Activated CD4-positive, alpha-beta T cell treated with anti-CD3 and anti-CD28 coated beads, Interleukin-2, amount 10 ng/mL, durations not matched to agents 24 days and 14 days (primary cell): ENCODE measurements at regions of chr22 and their contacts with region 1.

Region 1: DNA sequence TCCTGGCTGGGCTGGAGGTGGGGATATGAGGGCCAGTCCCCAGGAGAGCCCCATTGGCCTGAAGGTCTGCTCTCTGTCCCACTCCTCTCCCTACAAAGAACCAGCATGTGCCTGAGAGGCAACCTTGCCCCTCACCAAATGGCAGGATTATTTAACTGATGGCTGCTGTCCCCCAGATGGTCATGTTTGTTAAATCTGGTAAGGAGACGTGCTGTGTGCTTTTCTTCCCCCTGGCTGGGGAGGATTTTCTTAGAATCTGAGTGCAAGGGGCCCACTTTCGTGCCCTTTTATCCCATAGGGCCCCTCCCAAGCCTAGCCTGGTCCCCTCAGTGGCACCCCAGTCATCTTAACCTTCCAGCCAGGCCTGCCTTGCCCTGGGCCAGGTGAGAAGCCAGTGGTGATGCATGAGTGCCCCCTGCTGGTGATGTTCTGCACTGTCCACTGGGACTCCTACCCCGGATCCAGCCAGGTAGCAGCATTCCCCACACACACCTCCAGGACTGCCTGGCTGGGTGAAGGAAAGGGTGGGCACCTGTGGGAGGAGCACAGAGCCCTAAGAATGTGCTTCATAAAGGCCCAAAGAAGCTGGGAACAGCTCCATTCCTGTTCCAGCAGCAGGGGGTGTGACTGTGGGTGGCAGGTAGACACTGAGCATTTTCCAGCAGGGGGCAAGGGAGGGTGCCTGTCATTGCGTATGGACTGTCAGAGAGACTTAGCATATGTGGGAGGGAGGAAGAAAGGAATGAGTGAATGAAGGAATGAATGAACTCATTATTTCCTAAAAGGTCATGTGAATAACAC is 28.9 kb downstream of the MFNG start:
- DNase-seq: peak; percentile 95
- H3K4me3 Mint-ChIP-seq: no peak overlapping the region
- H3K27ac Mint-ChIP-seq: no peak overlapping the region
- H3K4me1 Mint-ChIP-seq: peaks cover 9% of the 10 kb centered on the region
- H3K27me3 Mint-ChIP-seq: no peaks in the 10 kb centered on the region

Region 2: GRCh38 chr22:37267135-37267587 is 190.1 kb before region 1 on chr22:
- intact Hi-C with region 1: loop called (anchors 1 kb)
- DNase-seq: peak; percentile 95
- H3K4me3 Mint-ChIP-seq: peak overlapping the region; percentile 86
- H3K27ac Mint-ChIP-seq: peak overlapping the region; percentile 87
- H3K4me1 Mint-ChIP-seq: peaks cover 34% of the 10 kb centered on the region
- H3K27me3 Mint-ChIP-seq: peaks cover 5% of the 10 kb centered on the region

Region 3: DNA sequence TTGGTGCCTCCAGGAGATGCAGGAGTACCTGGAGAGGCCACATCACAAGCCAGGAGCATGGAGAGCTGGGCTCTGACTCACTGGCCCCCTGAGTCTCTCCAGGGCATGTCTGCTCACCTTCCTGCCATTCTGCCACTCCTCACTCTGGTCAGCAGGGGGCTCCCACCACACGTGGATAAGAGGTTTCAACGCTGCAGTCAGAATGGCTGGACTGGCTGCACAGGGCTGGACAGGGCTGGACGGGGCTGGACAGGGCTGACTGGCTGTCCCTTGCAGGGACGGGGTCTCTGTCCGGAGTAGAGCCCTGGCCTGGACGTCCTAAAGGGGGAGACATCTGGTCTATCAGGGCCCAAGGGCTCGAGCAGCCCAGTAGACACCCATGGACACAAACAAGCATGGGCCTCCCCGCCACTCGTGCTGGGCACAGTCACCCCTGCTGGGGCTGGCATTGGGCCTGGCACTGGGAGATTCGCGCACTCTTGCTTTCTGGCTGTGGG is 140.4 kb before region 1 on chr22:
- intact Hi-C with region 1: loop called (anchors 1 kb)
- DNase-seq: peak; percentile 90
- H3K4me3 Mint-ChIP-seq: no peak overlapping the region
- H3K27ac Mint-ChIP-seq: no peak overlapping the region
- H3K4me1 Mint-ChIP-seq: peaks cover 36% of the 10 kb centered on the region
- H3K27me3 Mint-ChIP-seq: peaks cover 14% of the 10 kb centered on the region

Region 4: DNA sequence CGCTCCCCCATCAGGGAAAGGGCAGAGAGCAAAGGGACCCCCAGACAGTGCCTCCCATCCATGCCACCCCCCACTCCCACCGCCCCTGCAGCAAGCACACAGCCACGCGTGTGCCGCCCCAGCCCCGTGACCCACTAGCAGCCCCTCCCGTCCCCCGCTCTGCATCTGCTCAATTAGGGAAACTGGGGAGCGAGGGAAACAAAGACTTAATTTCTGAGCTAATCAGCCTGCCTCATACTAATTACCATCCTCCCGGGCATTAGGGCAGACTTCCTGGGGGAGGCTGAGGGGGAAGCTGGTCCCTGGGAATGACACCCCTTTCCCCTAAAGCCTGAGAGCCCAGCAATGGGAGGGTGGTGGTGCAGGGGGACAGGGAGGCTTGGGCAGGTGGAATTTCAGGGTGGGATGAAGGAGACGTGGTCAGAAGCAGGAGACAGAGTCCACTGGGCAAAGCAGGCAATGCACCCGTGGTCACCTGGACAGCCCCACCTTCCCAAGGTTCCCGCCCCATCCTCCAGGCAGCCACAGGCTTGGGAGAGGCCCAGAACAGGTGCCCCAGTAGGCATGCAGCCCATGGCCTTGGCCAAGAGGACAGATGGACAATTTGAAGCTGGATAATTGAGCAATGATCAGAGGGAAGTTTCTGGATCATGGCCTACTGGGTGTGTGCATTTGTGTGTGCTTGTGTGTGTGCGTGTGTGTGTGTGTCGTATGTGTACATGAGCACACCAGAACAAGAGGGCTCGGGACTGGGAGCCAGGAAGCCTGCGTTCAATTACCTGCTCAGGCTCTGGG is 50.7 kb before region 1 on chr22:
- intact Hi-C with region 1: no loop called
- DNase-seq: no peak
- H3K4me3 Mint-ChIP-seq: no peak overlapping the region
- H3K27ac Mint-ChIP-seq: no peak overlapping the region
- H3K4me1 Mint-ChIP-seq: peaks cover 4% of the 10 kb centered on the region
- H3K27me3 Mint-ChIP-seq: no peaks in the 10 kb centered on the region

Region 5: DNA sequence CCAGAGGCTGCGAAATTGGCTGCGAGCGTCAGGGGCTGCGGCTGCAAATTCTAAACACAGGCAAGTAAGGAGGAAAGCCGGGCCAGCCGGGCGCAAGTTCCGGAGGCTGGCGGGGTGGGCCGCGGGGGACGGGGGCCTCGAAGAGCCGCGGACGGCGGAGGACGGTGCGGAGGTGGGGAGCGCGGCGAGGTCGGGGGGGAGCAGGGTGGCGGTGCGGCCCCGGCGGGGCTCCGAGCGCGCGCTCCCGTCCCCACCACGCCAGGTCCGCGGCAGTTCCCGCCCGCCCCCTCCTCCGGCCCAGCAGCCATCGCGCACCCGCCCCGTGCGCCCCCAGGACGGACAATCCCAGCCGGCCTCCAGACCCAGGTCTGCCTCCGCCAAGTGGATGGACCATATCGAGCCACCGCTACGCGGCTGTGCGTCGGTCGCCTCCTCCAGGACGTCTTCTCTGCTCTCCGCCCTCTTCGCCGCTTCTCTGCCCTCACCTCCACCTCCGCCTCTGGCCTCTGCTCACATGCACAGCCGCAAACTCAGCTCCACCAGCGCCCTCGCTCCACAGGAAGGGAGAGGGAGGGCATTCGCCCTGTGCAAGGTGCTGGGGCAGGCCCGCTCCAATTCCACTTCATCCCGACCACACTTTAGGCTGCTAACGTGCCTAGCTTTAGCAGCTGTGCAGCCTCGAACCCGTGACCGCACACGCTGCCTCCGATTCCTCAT is 37.2 kb before region 1 on chr22:
- intact Hi-C with region 1: loop called (anchors 5 kb)
- DNase-seq: peak; percentile 80
- H3K4me3 Mint-ChIP-seq: peak overlapping the region; percentile 74
- H3K27ac Mint-ChIP-seq: no peak overlapping the region
- H3K4me1 Mint-ChIP-seq: peaks cover 27% of the 10 kb centered on the region
- H3K27me3 Mint-ChIP-seq: peaks cover 69% of the 10 kb centered on the region

Region 6: DNA sequence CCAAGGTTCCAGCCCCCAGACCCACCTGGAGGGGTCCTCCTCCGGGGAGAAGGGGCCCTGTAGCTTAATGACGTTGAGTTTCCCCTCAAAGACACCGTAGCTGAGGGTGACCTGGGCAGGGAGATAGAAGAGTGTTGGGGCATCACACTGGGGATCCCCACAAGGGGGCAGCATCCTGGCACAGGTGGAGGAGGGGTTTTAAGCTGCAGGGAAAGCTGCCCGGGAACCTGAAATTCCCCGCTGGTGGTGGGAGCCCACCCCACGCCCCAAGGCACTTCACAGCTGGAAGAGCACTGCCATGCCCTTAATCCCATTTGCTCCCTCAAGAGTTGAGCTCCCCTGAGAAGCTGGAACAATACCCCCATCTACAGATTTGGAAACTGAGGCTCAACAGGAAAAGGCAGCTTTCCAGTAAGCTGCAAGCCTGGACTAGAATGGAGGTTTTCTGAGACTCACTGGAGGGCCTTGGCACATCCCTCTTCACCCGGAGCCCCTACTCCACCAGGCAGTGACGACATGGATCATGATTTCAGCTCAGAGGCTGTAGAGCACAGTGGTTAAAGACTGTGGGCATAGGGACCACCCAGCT is 15.2 kb after region 1 on chr22:
- intact Hi-C with region 1: no loop called
- DNase-seq: peak; percentile 79
- H3K4me3 Mint-ChIP-seq: no peak overlapping the region
- H3K27ac Mint-ChIP-seq: no peak overlapping the region
- H3K4me1 Mint-ChIP-seq: peaks cover 10% of the 10 kb centered on the region
- H3K27me3 Mint-ChIP-seq: no peaks in the 10 kb centered on the region

Region 7: GRCh38 chr22:37498289-37498909 is 41.1 kb after region 1 on chr22:
- intact Hi-C with region 1: no loop called
- DNase-seq: peak; percentile 89
- H3K4me3 Mint-ChIP-seq: no peak overlapping the region
- H3K27ac Mint-ChIP-seq: no peak overlapping the region
- H3K4me1 Mint-ChIP-seq: peaks cover 14% of the 10 kb centered on the region
- H3K27me3 Mint-ChIP-seq: peaks cover 7% of the 10 kb centered on the region